Head of caudate nucleus (tissue), 42 donors: ENCODE measurements at regions of chr12 and their contacts with region 1.

Region 1: DNA sequence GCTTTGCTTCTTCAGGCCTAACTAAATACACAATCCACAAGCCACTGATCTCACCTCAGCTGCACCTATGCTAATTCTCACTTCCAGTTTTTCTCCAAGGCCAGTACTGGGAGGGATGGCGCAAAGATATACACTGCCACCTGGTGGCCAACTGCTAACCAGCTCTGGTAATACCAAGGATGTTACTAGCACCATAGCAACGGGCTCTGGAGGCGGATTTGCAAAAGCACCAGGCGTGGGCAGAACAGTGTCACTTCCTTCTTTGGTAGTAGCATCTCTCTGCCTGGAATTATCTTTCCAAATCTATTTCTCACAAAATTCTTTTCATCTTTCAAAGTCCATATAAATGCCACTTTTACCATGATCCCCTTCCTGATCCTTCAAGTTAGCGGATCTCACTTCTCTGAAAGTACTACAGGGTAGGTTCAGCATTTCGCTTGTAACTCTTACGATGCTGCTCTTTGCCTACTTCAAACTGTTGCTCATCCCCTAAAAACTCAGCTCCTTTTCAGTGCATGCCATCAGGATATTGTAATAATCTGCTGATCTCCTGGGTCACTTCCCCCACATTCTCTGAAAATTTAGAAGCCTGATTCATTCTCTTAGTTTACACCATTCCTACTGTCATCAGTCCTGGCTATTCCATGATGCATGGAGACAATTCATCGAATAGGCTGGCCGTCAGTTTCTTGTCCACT is 37.1 kb upstream of the FOXJ2 start:
- DNase-seq: peak; percentile 67 to 97 (median 87)

Region 2: GRCh38 chr12:7859552-7859951 is 135.9 kb before region 1 on chr12:
- intact Hi-C with region 1: loop called (anchors 5 kb)
- DNase-seq: no peak

Region 3: DNA sequence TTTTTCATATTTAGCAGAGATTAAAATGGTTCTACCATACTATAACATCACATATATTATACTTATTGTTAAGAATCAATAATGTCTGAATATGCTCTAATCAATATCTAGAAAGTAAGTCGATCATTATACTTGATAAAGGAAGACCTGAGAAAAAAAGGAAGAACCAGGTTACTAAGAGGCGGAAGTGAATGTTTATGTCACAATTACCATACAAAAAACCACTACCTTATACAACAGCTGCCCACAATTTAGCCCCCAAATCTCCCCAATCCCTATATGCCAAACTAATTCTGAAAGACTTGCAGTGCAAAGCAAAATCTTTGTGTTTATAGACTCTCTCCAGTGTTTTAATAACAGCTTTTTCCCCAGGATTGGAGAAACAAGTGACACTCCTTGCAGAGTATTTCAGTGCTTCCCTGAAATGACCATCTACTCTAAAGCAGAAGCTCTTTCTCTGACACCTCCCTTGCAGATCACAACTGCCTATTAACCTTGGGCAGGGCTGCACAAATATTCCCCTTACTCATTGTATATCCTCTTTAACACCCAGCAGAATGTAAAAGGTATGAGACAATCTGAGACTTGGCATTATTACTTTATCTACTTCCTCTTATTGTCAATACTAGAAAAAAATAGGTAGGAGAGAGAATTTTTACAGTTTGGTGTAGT is 46.7 kb before region 1 on chr12:
- intact Hi-C with region 1: no loop called
- DNase-seq: no peak